Caco-2 (cell line): ENCODE measurements at regions of chr3 and their contacts with region 1.

Region 1: DNA sequence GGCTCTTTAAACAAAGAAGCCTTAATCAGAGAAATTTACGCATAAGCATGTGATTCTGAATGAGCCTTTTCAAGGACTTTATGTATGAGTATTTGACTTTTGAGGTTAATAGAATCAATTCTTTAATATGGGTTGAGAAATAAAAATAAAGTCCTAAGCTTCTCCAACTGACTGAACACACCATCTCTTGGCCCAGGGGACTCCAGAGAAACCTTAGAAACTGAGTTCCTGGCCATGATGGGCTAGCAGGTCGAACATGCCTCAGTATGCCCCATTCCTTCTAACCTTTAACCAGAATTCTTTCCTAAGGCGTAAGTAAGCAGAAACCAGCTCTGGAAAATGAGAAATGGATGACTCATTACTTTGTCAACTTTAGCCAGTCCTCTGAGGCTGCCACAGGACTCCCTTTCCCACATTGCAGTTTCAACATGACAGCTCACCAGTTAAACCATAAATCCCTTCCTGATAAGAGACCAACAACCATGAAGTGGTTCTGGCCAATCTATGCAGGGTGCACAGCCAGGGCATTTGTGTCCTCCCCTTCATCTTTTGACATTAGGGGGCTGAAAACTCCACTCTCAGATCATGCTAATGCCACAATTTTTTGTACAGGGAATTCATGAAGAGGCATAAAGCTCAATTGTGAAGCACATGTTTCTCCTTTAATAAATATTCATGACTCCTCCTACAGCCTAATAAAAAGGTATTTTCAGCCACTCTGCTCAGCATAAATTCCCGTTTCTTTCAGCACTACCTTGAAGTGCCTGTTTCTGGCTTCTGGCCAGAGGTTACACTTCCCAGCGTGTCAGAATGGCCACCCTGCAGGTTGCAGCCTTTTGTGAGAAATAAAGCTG is 33.3 kb downstream of the TM4SF18 start:
- DNase-seq: peak; percentile 81 to 88
- H3K4me3 ChIP-seq: no peak overlapping the region
- H3K4me3 Mint-ChIP-seq: peak overlapping the region; percentile 49
- H3K27ac Mint-ChIP-seq: peak overlapping the region; percentile 61
- H3K4me1 ChIP-seq: peaks cover 35% of the 10 kb centered on the region
- H3K4me1 Mint-ChIP-seq: peaks cover 16% of the 10 kb centered on the region
- H3K27me3 ChIP-seq: no peaks in the 10 kb centered on the region
- H3K27me3 Mint-ChIP-seq: no peaks in the 10 kb centered on the region
- CTCF ChIP-seq: no peak

Region 2: GRCh38 chr3:149114458-149114857 is 185.7 kb before region 1 on chr3:
- CTCF ChIA-PET with region 1: interaction called, 12 read pairs
- POLR2A ChIA-PET with region 1: no interaction called
- intact Hi-C with region 1: no loop called
- DNase-seq: no peak
- H3K4me3 ChIP-seq: no peak overlapping the region
- H3K4me3 Mint-ChIP-seq: no peak overlapping the region
- H3K27ac Mint-ChIP-seq: no peak overlapping the region
- H3K4me1 ChIP-seq: no peaks in the 10 kb centered on the region
- H3K4me1 Mint-ChIP-seq: no peaks in the 10 kb centered on the region
- H3K27me3 ChIP-seq: no peaks in the 10 kb centered on the region
- H3K27me3 Mint-ChIP-seq: no peaks in the 10 kb centered on the region
- CTCF ChIP-seq: no peak

Region 3: DNA sequence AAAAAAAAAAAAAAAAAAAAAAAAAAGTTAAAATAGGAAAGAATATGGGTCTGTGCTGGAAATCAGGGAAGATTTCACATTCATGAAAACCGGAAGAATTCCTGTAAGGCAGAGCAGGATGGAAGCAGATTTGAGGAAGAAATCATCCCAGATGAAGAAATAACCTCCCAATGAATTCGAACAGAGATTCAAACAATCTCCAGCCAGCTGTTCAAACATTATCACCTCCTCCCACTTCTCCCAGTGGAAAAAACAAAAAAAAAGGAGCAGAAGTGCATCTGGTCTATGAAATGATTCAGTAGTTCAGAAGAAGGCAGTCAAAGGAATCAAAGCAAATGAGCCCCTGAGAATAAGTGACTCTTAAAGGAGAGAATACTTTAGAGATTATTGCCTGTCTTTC is 111.7 kb before region 1 on chr3:
- CTCF ChIA-PET with region 1: no interaction called
- POLR2A ChIA-PET with region 1: no interaction called
- intact Hi-C with region 1: no loop called
- DNase-seq: no peak
- H3K4me3 ChIP-seq: no peak overlapping the region
- H3K4me3 Mint-ChIP-seq: no peak overlapping the region
- H3K27ac Mint-ChIP-seq: no peak overlapping the region
- H3K4me1 ChIP-seq: peaks cover 21% of the 10 kb centered on the region
- H3K4me1 Mint-ChIP-seq: peaks cover 15% of the 10 kb centered on the region
- H3K27me3 ChIP-seq: no peaks in the 10 kb centered on the region
- H3K27me3 Mint-ChIP-seq: no peaks in the 10 kb centered on the region
- CTCF ChIP-seq: no peak

Region 4: GRCh38 chr3:149245738-149246451 is 54.3 kb before region 1 on chr3:
- CTCF ChIA-PET with region 1: no interaction called
- POLR2A ChIA-PET with region 1: no interaction called
- intact Hi-C with region 1: no loop called
- DNase-seq: peak in 1 of 2 experiments; percentile 62
- H3K4me3 ChIP-seq: no peak overlapping the region
- H3K4me3 Mint-ChIP-seq: peak overlapping the region; percentile 12
- H3K27ac Mint-ChIP-seq: no peak overlapping the region
- H3K4me1 ChIP-seq: peaks cover 29% of the 10 kb centered on the region
- H3K4me1 Mint-ChIP-seq: peaks cover 11% of the 10 kb centered on the region
- H3K27me3 ChIP-seq: no peaks in the 10 kb centered on the region
- H3K27me3 Mint-ChIP-seq: no peaks in the 10 kb centered on the region
- CTCF ChIP-seq: no peak

Region 5: GRCh38 chr3:149288655-149289054 is 11.5 kb before region 1 on chr3:
- CTCF ChIA-PET with region 1: no interaction called
- POLR2A ChIA-PET with region 1: no interaction called
- intact Hi-C with region 1: no loop called
- DNase-seq: no peak
- H3K4me3 ChIP-seq: no peak overlapping the region
- H3K4me3 Mint-ChIP-seq: no peak overlapping the region
- H3K27ac Mint-ChIP-seq: no peak overlapping the region
- H3K4me1 ChIP-seq: peaks cover 7% of the 10 kb centered on the region; the same call in 1 of the 2 replicates
- H3K4me1 Mint-ChIP-seq: no peaks in the 10 kb centered on the region
- H3K27me3 ChIP-seq: no peaks in the 10 kb centered on the region
- H3K27me3 Mint-ChIP-seq: no peaks in the 10 kb centered on the region
- CTCF ChIP-seq: no peak